ENCODE measurements at regions of chr10 and their contacts with region 1.

Region 1: GRCh38 chr10:123203393-123204134 is 49.4 kb downstream of the BUB3 start:
- DNase-seq: peak; percentile 32
- H3K4me3 Mint-ChIP-seq: peak overlapping the region; percentile 2
- H3K27ac Mint-ChIP-seq: no peak overlapping the region
- H3K4me1 Mint-ChIP-seq: peaks cover 30% of the 10 kb centered on the region
- H3K27me3 Mint-ChIP-seq: no peaks in the 10 kb centered on the region
- CTCF ChIP-seq: no peak

Region 2: GRCh38 chr10:123187781-123188180 is 15.8 kb before region 1 on chr10:
- CTCF ChIA-PET with region 1: interaction called, 10 read pairs
- intact Hi-C with region 1: no loop called
- DNase-seq: no peak
- H3K4me3 Mint-ChIP-seq: no peak overlapping the region
- H3K27ac Mint-ChIP-seq: no peak overlapping the region
- H3K4me1 Mint-ChIP-seq: no peaks in the 10 kb centered on the region
- H3K27me3 Mint-ChIP-seq: no peaks in the 10 kb centered on the region
- CTCF ChIP-seq: no peak

Region 3: DNA sequence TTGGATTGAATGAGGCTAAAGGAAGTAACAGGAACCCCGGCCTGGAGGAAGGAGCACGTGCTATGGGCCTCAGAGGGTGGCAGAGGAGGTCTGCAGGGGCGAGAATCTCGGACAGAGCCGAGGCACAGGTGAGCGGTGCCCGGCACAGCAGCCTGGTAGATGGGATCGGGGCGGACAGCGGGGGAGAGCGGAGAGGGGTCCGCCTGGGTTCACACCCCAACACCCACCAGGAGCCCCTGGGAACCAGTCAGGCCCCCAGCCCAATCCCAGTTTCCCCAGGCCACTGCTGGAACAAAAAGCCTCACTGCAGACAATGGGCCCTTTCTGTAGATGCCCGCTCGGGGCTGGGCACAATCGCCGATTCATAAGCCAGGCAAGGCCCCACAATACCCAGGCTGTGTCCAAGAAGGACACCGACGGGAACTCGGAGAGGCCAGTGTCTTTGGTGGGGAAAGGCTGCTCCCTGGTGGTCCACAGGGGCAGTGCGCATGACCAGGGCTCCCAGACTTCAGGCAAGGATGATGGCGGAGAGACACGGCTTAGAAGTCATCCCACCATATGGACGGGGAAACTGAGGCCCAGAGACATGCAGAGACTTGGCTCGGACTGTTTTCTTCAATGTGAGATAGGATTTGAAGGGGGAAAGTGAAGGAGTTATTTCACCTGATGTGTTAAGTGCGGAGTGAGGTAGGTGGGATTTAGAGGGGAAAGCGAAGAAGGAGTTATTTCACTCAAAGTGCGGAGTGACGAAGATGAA is 355.7 kb after region 1 on chr10:
- CTCF ChIA-PET with region 1: no interaction called
- intact Hi-C with region 1: no loop called
- DNase-seq: peak; percentile 70
- H3K4me3 Mint-ChIP-seq: no peak overlapping the region
- H3K27ac Mint-ChIP-seq: no peak overlapping the region
- H3K4me1 Mint-ChIP-seq: no peaks in the 10 kb centered on the region
- H3K27me3 Mint-ChIP-seq: peaks cover 30% of the 10 kb centered on the region
- CTCF ChIP-seq: peak; percentile 84

Measured in Calu3 (cell line).